ENCODE measurements at regions of chr11 and their contacts with region 1.

Region 1: DNA sequence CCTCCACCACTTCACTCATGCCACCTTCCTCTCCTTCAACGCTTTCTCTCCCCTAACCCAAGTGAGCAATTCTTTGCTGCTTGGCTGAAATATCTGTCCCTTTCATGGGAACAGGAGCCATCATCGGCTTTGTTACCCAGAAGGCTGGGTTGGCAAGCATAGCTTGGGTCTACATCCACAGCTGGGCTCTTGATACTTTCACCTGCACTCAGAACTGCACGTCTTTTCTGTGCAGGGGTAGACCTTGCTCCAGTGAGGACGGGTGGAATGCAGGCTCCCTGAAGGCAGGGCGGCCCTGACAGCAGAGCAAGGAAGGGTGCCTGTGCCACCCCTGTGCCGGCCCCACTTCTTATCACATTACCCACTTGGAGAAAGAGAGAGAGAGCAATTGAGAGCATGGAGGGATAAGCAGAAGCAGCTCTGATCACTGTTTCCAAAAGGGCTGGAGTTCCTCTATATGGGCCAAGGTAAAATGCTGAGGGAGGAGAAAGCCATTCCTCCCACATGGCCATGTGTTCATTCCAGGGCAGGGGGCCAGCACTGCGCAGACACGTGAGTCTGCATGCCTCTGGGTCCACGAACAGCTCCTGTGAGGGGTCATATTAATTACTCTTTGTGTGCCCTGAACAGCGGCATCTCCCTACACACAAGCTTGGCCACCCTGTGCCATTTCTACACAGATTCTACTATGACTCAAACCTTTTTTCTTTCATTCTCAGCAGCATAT is 181.8 kb downstream of the BUD13 start:
- DNase-seq: no peak
- H3K4me3 ChIP-seq: no peak overlapping the region
- H3K27ac ChIP-seq: no peak overlapping the region
- H3K4me1 ChIP-seq: no peaks in the 10 kb centered on the region
- H3K27me3 ChIP-seq: no peaks in the 10 kb centered on the region
- CTCF ChIP-seq: no peak

Region 2: GRCh38 chr11:116505298-116506262 is 85.4 kb before region 1 on chr11:
- CTCF ChIA-PET with region 1: no interaction called
- dilution Hi-C with region 1: loop called (anchors 5 kb)
- in situ Hi-C with region 1: no loop called
- intact Hi-C with region 1: no loop called
- DNase-seq: no peak
- H3K4me3 ChIP-seq: no peak overlapping the region
- H3K27ac ChIP-seq: no peak overlapping the region
- H3K4me1 ChIP-seq: no peaks in the 10 kb centered on the region
- H3K27me3 ChIP-seq: peaks cover 8% of the 10 kb centered on the region
- CTCF ChIP-seq: no peak

Region 3: DNA sequence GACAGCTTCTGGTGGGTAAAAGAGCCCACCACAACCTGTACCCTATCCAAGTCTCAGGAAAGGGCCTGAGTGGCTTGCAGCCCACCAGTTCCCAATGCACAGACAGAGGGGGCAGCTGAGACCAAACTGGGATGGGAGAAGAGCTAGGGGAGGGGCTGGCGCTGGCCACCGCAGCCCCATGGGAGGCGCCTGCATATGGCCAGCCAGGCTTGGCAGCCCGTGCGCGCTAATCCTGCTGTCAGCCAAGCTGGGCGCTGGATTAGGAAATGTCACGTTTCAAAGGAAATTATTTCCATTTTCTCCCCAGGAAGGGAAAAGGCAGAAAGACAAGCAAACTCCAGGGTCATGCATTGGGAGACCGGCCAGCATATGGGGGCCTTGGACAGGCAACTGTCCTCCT is 55.0 kb before region 1 on chr11:
- CTCF ChIA-PET with region 1: no interaction called
- dilution Hi-C with region 1: loop called (anchors 5 kb)
- in situ Hi-C with region 1: no loop called
- intact Hi-C with region 1: no loop called
- DNase-seq: no peak
- H3K4me3 ChIP-seq: no peak overlapping the region
- H3K27ac ChIP-seq: no peak overlapping the region
- H3K4me1 ChIP-seq: no peaks in the 10 kb centered on the region
- H3K27me3 ChIP-seq: peaks cover 3% of the 10 kb centered on the region
- CTCF ChIP-seq: no peak

Measured in mammary epithelial cell (primary cell).